ENCODE measurements at regions of chr20 and their contacts with region 1.

Region 1: DNA sequence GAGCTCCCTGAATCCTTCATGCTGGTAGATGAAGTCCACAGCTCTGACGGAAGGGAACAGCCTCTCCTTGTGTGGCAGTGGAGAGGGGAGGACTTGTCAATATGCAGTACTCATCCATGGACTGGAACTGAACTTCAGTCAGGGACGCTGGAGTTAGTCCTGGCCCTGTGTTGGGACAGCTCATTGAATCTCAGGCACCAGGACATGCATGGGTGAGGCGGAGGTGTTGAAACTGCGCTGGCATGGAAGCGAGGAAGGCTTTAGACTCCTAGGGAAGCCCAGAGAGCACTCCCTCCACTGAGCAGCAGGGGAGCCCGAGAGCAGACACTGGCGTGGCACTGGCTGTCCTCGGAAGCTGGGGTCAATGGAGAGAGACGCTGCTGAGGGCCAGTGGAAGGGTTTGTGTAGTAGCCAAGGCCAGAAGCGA is 161.3 kb upstream of the GGTLC1 start:
- DNase-seq: no peak
- CTCF ChIP-seq: no peak

Region 2: DNA sequence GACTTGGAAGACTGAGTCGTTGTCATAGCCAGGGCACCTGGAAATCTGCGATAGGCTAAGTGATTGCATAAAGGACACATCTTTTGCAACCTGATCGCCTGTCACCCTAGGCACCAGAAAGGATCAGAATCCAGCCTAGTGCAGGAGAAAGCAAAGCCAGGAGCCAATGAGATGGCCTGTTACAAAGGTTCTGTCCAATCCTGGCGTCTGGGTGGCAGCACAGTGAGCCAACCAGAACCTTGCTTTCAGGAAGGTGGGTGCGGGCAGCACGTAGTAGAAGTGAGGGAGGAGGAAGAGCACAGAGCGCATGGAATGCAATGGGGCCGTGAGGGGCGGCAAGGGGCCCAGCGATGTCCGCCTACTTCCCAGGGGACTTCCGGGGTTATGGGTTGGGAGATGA is 40.9 kb before region 1 on chr20:
- CTCF ChIA-PET with region 1: no interaction called
- POLR2A ChIA-PET with region 1: no interaction called
- DNase-seq: no peak
- CTCF ChIP-seq: no peak

Region 3: DNA sequence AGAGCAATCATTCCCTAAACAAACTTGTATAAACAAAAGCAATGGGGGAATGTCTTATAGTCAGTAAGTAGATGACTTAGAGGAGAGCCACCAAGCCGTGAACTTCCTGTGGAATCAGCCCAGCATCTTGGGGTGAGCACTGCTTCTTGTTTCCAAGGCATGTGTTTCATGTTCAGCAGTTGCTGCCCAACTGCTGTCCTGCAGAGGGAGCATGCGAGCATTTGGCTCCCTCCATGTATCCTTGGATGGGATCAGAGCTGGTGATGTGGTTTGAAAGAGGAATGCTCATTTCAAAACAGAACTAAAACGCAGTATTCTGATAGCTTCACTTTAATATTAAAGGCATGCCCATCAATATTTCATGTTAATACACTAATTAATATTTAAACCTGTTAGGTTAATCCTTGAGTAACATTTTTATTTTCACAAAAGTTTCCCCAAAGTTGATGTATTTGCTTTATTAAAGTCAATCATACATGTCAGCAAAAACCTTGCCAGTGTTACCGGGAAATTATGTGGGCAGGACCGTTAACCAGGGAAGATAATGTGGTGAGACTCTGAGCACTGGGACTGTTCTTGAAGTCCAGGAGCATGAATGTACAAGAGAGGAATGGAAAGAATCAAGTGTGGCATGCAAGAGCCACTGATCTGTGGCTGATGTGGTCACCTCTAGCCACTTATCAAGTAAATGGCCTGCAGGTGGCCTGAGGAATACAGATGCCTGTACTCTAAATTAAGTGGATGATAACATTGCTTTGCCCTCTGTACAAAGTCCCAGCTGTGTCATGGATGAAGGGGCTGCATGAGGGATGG is 10.9 kb after region 1 on chr20:
- CTCF ChIA-PET with region 1: interaction called, 12 read pairs
- POLR2A ChIA-PET with region 1: no interaction called
- DNase-seq: no peak
- CTCF ChIP-seq: peak; percentile 64

Measured in GM10248 (cell line).